MCF 10A (cell line): ENCODE measurements at regions of chr3 and their contacts with region 1.

Region 1: GRCh38 chr3:193078996-193079753 is 161.5 kb upstream of the MB21D2 start:
- DNase-seq: no peak
- H3K4me3 Mint-ChIP-seq: no peak overlapping the region
- H3K27ac Mint-ChIP-seq: no peak overlapping the region
- H3K4me1 Mint-ChIP-seq: no peaks in the 10 kb centered on the region
- H3K27me3 Mint-ChIP-seq: peaks cover 39% of the 10 kb centered on the region
- CTCF ChIP-seq: no peak

Region 2: DNA sequence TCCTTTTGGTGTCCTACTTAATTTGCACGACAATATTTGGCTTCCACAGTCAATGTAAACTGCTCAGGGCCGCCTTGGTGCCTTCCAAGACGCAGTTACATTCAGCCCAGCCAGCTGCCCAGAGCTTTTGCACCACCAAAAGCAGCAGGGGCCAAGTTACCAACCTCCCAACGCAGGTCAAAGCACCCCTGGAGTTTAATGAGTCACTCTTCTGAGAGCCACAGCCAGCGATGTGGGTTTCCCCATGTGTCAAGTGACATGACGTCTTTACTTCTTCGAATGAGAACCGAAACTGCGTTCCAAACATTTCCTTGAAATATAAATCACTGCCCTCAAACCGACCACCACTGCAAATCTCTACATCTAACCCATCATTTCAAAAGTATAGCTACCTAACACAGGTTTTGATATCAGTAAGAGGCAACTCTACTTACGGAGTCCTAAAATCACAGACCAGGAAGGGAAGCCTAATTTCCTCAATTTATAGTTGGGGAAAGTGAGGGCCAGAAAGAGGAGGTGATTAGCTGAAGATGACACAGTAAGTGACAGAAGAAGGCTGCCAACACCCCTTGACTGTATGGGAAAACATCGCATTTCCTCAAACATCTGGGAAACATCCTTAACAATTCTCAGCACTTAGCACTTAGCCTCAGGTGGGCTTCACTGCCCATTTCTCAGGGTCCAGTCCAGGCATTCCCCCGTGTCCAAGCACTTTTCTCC is 186.0 kb before region 1 on chr3:
- CTCF ChIA-PET with region 1: no interaction called
- POLR2A ChIA-PET with region 1: no interaction called
- intact Hi-C with region 1: no loop called
- DNase-seq: peak; percentile 90
- H3K4me3 Mint-ChIP-seq: peak overlapping the region; percentile 5
- H3K27ac Mint-ChIP-seq: peak overlapping the region; percentile 10
- H3K4me1 Mint-ChIP-seq: peaks cover 30% of the 10 kb centered on the region
- H3K27me3 Mint-ChIP-seq: no peaks in the 10 kb centered on the region
- CTCF ChIP-seq: no peak

Region 3: DNA sequence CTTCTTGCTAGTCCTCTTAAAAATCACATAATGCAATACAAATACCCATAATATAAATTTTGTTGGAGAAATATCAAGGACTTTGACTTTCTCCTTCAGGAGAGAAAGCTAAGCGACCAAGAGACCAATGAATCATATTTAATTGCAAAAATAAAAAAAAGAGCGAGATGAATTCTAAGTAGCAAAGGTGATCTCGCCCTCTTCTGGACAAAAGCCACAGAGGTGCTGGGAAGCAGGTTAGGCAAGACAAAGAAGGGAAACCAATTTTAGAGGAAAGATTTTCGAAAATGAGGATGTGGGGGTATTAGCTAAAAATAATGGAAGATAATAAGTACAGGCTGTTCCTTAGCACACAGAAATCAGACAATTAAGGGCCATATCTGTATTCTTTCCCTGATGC is 50.4 kb after region 1 on chr3:
- CTCF ChIA-PET with region 1: no interaction called
- POLR2A ChIA-PET with region 1: no interaction called
- intact Hi-C with region 1: loop called (anchors 5 kb)
- DNase-seq: peak; percentile 34
- H3K4me3 Mint-ChIP-seq: no peak overlapping the region
- H3K27ac Mint-ChIP-seq: no peak overlapping the region
- H3K4me1 Mint-ChIP-seq: peaks cover 7% of the 10 kb centered on the region
- H3K27me3 Mint-ChIP-seq: peaks cover 56% of the 10 kb centered on the region
- CTCF ChIP-seq: no peak

Region 4: DNA sequence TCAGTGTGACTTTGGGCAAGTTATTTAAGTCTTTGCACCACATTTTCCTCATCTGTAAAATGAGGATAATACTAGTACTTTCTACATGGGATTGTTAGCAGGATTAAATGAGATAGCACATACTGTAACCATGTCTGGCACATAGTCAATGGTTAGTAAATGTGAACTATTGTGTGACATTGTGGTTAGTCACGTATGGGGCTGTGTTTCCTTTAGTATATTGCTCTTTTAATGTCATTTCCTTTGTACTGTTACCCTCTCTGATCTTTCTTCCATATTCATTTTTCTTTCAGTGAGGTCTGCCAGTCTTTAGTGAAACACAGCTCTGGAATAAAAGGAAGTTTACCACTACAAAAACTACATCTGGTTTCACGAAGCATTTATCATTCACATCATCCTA is 535.3 kb after region 1 on chr3:
- CTCF ChIA-PET with region 1: no interaction called
- POLR2A ChIA-PET with region 1: no interaction called
- intact Hi-C with region 1: no loop called
- DNase-seq: no peak
- H3K4me3 Mint-ChIP-seq: no peak overlapping the region
- H3K27ac Mint-ChIP-seq: no peak overlapping the region
- H3K4me1 Mint-ChIP-seq: no peaks in the 10 kb centered on the region
- H3K27me3 Mint-ChIP-seq: no peaks in the 10 kb centered on the region
- CTCF ChIP-seq: no peak